GM10248 (cell line): ENCODE measurements at regions of chr2 and their contacts with region 1.

Region 1: DNA sequence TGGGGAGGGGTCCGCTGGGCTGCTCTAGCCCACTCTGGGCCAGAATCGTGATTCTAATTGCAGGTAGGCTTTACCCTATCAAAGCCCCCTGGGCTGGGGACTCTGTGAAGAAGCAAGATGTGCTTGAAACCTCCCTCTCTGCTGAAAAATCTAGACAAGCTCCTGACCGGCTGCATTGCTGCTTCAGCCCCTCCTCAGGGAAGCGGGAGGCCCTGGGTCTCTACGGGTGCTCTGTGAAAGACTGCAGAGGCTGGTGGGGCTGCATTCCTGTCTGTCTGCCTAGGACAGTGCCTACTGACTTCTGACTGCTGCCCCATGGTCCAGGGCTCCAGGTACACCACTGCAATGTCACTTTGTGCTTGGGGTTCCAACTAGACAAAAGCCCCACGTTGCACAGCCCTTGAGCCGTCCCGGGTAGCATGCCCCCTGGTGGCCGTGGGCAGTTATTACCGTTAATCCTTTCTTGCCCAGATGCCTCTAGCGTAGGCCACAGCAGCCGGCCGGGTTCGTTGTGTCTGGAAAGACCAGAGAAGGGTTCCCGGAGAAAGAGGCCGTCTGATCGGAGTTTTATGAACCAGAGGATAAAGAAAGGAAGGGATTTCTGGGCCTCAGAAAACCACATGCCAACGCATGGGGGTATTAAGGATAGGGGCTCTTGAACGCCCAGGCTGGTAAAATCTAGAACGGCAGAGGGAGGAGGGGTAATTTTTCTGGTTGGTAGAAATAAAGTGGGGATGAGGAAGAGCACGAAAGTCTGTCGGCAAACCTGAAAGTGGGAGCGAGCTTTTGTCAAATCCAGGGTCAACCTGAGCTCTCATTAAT is 15.9 kb upstream of the C1QL2 start:
- DNase-seq: peak; percentile 69
- CTCF ChIP-seq: peak; percentile 88

Region 2: DNA sequence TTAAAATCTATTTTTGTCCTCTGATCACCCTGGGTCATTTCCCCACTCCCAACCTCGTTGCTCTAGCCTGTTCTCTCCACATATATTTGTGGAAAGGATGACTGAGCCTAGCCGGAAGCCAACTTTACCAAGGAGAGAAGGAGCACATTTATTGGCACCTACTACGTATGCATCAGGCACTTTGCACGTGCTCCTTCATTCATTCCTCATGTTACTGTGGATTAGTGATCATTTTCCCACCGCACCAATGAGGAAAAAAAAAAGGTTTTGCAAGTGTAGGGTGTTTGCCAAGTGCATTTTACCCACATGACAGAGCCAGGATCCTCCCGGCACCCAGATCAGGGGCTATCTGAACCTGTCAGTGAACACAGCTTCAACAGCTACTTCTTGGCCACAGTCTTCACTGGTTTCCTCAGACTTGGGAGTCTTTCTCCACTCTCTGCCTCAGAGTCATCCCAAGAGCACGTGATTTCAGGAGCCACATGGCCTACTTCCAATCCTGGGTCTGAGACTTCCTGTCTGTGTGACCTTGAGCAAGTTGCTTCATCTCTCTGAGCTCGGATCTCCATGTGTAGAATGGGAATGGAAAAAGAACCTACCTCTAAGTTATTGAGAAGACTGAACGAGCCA is 14.0 kb before region 1 on chr2:
- CTCF ChIA-PET with region 1: interaction called, 12 read pairs
- POLR2A ChIA-PET with region 1: no interaction called
- DNase-seq: no peak
- CTCF ChIP-seq: no peak

Region 3: GRCh38 chr2:119184512-119184911 is 10.1 kb after region 1 on chr2:
- CTCF ChIA-PET with region 1: interaction called, 12 read pairs
- POLR2A ChIA-PET with region 1: no interaction called
- DNase-seq: no peak
- CTCF ChIP-seq: no peak

Region 4: DNA sequence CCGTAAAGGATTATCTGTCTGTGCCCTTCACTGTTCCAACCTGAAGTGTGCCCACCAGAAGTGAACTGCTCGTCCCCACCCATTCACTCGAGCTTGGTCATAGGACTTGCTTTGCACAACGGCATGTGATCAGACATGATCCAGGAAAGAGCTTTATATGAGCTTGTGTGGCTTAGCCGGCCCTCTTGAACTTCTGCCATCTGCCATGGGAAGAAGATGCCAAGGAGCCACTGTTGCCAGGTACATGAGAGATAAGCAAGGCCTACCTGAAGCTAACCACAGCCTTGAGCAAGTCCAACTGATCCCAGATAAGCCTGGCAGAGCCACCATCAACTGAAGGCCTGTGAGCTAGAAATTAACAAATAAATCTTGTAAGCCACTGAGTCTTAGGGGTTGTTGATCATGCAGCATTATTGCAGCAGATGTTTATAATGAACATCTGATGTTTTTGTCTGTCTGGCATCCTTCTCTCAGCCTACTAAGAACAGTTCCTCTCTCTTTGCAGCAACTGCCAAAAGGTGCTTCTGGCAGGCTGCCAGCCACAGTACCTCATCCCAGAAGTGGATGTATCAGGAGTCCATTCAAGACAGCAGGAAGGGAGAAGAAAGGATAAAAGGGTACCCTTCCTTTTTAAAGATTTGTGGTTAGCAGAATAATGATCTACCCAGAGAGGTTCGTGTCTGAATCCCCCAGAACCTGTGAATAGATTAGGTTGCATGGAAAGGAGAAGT is 209.1 kb after region 1 on chr2:
- CTCF ChIA-PET with region 1: no interaction called
- POLR2A ChIA-PET with region 1: no interaction called
- DNase-seq: no peak
- CTCF ChIP-seq: no peak